Activated naive CD4-positive, alpha-beta T cell treated with anti-CD3 and anti-CD28 coated beads for 36 hours (primary cell): ENCODE measurements at regions of chr3 and their contacts with region 1.

Region 1: DNA sequence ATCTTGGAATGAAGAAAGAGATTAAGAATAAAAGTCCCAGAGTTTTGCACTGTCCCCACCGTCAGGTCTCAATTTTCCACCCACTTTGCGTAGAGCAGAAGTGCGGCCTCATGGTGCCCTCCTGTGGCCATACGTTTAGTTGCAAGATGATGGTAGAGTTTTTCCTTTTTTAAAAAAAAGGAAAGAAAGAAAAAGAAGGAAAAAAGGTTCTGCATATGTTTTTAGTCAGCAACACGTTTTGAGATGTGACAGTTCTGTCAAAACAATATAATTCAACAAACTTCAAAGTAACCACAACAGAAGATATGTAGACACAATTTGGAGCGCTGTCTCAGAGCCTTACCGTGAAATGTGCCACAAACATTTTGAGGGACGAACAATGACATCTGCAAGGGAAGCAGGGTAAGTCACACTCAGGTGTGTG is 24.6 kb downstream of the EBLN2 start:
- DNase-seq: peak; percentile 69
- H3K4me3 Mint-ChIP-seq: no peak overlapping the region
- H3K27ac Mint-ChIP-seq: no peak overlapping the region
- H3K4me1 Mint-ChIP-seq: peaks cover 8% of the 10 kb centered on the region
- H3K27me3 Mint-ChIP-seq: no peaks in the 10 kb centered on the region

Region 2: DNA sequence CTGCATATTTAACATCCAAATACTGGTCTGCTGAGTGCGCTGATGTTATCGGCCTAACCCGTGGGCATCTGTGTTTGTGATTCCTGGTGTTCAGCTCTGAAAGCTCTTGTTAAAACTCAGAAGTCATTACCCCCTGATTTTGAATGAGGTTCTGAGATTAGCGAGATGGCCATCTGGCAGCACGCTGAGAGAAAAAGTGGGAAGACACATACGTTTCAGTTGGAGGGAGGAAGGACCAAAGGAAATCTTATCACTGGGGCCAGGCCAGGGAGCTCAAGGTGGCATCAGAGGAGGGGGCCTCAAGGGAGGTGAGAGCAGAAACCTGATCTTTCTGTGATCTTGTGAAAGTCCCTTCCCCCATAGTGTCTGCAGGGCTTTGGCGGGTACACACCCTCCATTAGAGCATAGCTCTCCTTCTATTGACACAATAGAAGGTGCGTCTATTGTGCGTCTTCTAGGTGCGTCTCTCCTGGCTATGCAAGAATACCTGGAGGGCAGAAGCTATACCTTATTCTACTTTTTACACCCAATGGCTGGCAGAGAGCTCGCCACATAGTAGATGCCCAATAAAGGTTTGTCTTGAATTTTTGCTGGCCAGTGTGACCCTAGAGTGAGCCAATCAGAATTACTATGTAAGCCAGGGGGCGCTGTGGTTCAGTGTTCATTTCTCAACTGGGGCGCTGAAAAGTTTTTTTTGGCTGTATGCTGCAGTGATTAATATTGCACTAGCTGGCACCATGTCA is 420.2 kb before region 1 on chr3:
- CTCF ChIA-PET with region 1: no interaction called
- intact Hi-C with region 1: loop called (anchors 5 kb)
- DNase-seq: peak; percentile 81
- H3K4me3 Mint-ChIP-seq: no peak overlapping the region
- H3K27ac Mint-ChIP-seq: no peak overlapping the region
- H3K4me1 Mint-ChIP-seq: no peaks in the 10 kb centered on the region
- H3K27me3 Mint-ChIP-seq: no peaks in the 10 kb centered on the region

Region 3: GRCh38 chr3:72938471-72939265 is 147.4 kb before region 1 on chr3:
- CTCF ChIA-PET with region 1: interaction called, 18 read pairs
- intact Hi-C with region 1: loop called (anchors 1 kb)
- DNase-seq: peak; percentile 26
- H3K4me3 Mint-ChIP-seq: no peak overlapping the region
- H3K27ac Mint-ChIP-seq: no peak overlapping the region
- H3K4me1 Mint-ChIP-seq: no peaks in the 10 kb centered on the region
- H3K27me3 Mint-ChIP-seq: no peaks in the 10 kb centered on the region

Region 4: GRCh38 chr3:72951259-72951722 is 134.8 kb before region 1 on chr3:
- CTCF ChIA-PET with region 1: interaction called, 13 read pairs
- intact Hi-C with region 1: no loop called
- DNase-seq: no peak
- H3K4me3 Mint-ChIP-seq: no peak overlapping the region
- H3K27ac Mint-ChIP-seq: no peak overlapping the region
- H3K4me1 Mint-ChIP-seq: peaks cover 12% of the 10 kb centered on the region
- H3K27me3 Mint-ChIP-seq: no peaks in the 10 kb centered on the region

Region 5: DNA sequence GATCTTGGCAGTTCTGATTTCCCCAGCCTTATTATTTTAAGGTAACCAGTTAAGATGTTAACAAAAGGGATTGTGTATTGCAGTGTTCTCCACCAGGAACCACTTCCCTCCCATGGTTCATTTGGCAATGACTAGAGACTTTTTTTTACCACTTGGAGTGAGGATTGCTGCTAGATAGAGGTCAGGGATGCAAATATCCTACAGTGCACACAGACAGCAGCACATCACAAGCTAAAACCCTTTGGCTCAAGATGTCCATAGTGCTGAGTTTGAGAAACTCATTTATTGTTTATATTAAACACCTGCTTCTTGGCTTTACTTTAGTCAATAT is 48.7 kb before region 1 on chr3:
- CTCF ChIA-PET with region 1: no interaction called
- intact Hi-C with region 1: no loop called
- DNase-seq: no peak
- H3K4me3 Mint-ChIP-seq: no peak overlapping the region
- H3K27ac Mint-ChIP-seq: peak overlapping the region; percentile 16
- H3K4me1 Mint-ChIP-seq: peaks cover 89% of the 10 kb centered on the region
- H3K27me3 Mint-ChIP-seq: no peaks in the 10 kb centered on the region

Region 6: GRCh38 chr3:73056014-73056844 is 29.9 kb before region 1 on chr3:
- CTCF ChIA-PET with region 1: interaction called, 12 read pairs
- intact Hi-C with region 1: no loop called
- DNase-seq: no peak
- H3K4me3 Mint-ChIP-seq: no peak overlapping the region
- H3K27ac Mint-ChIP-seq: no peak overlapping the region
- H3K4me1 Mint-ChIP-seq: peaks cover 17% of the 10 kb centered on the region
- H3K27me3 Mint-ChIP-seq: no peaks in the 10 kb centered on the region